Breast epithelium (tissue), 4 donors: ENCODE measurements at regions of chr6 and their contacts with region 1.

Region 1: DNA sequence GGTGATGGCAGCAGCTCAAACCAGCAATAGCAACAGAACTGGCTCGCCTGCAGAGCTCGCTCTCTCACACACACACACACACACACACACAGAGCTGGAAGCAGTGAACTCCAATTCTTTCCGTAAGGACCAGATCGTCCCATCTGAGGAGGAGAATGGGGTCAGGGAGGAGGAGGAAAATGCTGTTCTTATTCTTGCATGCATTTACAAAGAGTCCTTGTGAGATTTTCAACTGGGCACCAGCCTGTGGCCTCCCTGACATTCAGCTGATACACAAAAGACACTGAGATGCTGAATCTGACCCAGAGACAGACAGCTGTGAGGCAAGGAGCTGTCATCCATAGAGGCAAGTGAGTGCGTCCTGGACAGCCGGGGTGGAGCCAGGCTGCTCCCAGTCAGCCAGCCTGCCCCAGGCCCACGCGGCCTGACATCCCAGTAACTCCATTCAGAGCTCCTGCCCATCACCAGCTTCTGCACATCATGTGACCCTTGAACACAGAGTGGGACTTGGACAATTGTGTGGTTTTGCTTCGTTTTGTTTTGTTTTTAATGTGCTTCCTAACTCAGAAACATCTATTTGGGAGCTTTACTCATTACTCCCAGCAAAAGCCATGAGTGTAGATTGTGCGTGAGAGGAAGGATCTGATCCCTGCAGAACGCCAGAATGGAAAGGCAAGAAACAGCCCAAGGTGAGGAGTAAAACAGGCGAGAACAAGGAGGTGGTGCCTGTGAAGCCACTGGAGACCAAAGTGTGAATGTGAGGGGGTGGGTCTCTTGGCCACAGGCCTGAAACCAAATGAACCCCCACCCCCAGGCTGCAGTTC is 2.1 kb downstream of the SERPINB9 start:
- DNase-seq: no peak
- H3K4me3 ChIP-seq: peak overlapping the region; percentile 51 to 89 (median 57)
- H3K27ac ChIP-seq: peak overlapping the region; percentile 6 to 65
- H3K4me1 ChIP-seq: no peaks in the 10 kb centered on the region
- H3K27me3 ChIP-seq: peaks cover 0 to 3% of the 10 kb centered on the region in 2 donors
- CTCF ChIP-seq: no peak
- POLR2A ChIP-seq: no peak

Region 2: GRCh38 chr6:2714111-2714895 is 186.7 kb before region 1 on chr6:
- intact Hi-C with region 1: no loop called
- DNase-seq: no peak
- H3K4me3 ChIP-seq: no peak overlapping the region
- H3K27ac ChIP-seq: no peak overlapping the region
- H3K4me1 ChIP-seq: no peaks in the 10 kb centered on the region
- H3K27me3 ChIP-seq: no peaks in the 10 kb centered on the region
- CTCF ChIP-seq: no peak
- POLR2A ChIP-seq: no peak

Region 3: GRCh38 chr6:2911171-2911570 is 10.1 kb after region 1 on chr6:
- intact Hi-C with region 1: loop called (anchors 1 kb)
- DNase-seq: peak in 1 of 2 donors; percentile 13
- H3K4me3 ChIP-seq: no peak overlapping the region
- H3K27ac ChIP-seq: no peak overlapping the region
- H3K4me1 ChIP-seq: no peaks in the 10 kb centered on the region
- H3K27me3 ChIP-seq: no peaks in the 10 kb centered on the region
- CTCF ChIP-seq: no peak
- POLR2A ChIP-seq: no peak

Region 4: GRCh38 chr6:2971420-2972218 is 70.6 kb after region 1 on chr6 and contains the start of gene SERPINB6:
- intact Hi-C with region 1: loop called (anchors 2 kb)
- DNase-seq: peak; percentile 73 to 77
- H3K4me3 ChIP-seq: peak within 1 kb of the TSS; percentile 72 to 90 (median 81)
- H3K27ac ChIP-seq: peak within 1 kb of the TSS; percentile 98 to 100
- H3K4me1 ChIP-seq: no peaks in the 10 kb centered on the region
- H3K27me3 ChIP-seq: no peaks in the 10 kb centered on the region
- CTCF ChIP-seq: no peak
- POLR2A ChIP-seq: peak; percentile 35
- total RNA-seq, gene SERPINB6: 100 to 146 (median 137) TPM